ENCODE measurements at regions of chr10 and their contacts with region 1.

Region 1: DNA sequence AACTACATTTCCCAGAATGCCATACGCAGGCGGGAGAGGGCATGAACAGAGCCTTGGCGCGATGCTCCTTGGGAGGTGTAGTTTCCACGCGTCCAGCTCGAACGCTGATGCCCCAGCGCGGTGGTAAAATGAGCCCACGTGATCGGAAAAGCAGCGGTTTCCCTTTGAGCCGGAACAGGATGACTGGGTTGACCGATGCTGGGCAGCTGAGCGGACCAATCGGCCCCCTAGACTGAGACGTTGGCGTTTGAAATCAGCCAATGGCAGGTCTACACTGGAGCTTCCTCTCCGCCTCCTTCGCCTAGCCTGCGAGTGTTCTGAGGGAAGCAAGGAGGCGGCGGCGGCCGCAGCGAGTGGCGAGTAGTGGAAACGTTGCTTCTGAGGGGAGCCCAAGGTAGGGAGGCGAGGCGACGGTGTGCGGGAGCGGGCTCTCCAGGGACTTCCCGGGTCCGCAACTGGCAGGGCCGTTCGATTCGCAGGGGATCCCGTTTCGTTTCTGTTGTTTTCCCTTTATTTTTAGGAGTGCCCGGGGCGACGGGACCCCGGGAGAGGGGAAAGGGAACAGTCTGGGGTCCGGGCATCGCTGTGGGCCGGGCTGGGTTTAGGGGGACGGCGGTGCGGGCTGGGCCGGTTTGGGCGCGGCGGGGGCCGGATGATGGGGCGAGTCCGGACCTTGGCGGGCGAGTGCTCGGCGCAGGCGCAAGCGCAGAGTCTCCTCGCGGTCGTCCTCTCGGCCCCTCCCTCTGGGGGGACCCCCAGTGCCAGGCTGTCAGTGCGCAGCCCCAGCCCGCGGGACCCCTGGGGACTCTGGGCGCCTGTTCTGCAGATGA is at the start of gene BUB3:
- DNase-seq: peak; percentile 97 to 98 (median 97)
- H3K4me3 ChIP-seq: peak within 1 kb of the TSS; percentile 99
- H3K27ac ChIP-seq: peak within 1 kb of the TSS; percentile 36 to 80
- H3K4me1 ChIP-seq: peaks cover 6% of the 10 kb centered on the region
- H3K27me3 ChIP-seq: peaks cover 9% of the 10 kb centered on the region
- CTCF ChIP-seq: peak in 1 of 3 donors; percentile 12
- EP300 ChIP-seq: no peak
- POLR2A ChIP-seq: peak; percentile 69
- total RNA-seq, gene BUB3: 56.0 to 63.1 (median 61.6) TPM

Region 2: GRCh38 chr10:123008439-123009205 is 145.7 kb before region 1 on chr10 and contains the starts of genes ACADSB and IKZF5:
- intact Hi-C with region 1: loop called in 1 of 4 experiments (anchors 10 kb)
- DNase-seq: peak; percentile 95 to 97 (median 95)
- H3K4me3 ChIP-seq: peak within 1 kb of the TSS; percentile 98
- H3K27ac ChIP-seq: peak within 1 kb of the TSS; percentile 77 to 79
- H3K4me1 ChIP-seq: peaks cover 5% of the 10 kb centered on the region
- H3K27me3 ChIP-seq: no peaks in the 10 kb centered on the region
- CTCF ChIP-seq: peak in 1 of 3 donors; percentile 4
- EP300 ChIP-seq: no peak
- POLR2A ChIP-seq: peak; percentile 84
- total RNA-seq, gene ACADSB: 10.5 to 26.6 (median 24.0) TPM
- total RNA-seq, gene IKZF5: 8.2 to 28.6 (median 20.5) TPM

Measured in ovary (tissue), 10 donors.